ENCODE measurements at regions of chr14 and their contacts with region 1.

Region 1: DNA sequence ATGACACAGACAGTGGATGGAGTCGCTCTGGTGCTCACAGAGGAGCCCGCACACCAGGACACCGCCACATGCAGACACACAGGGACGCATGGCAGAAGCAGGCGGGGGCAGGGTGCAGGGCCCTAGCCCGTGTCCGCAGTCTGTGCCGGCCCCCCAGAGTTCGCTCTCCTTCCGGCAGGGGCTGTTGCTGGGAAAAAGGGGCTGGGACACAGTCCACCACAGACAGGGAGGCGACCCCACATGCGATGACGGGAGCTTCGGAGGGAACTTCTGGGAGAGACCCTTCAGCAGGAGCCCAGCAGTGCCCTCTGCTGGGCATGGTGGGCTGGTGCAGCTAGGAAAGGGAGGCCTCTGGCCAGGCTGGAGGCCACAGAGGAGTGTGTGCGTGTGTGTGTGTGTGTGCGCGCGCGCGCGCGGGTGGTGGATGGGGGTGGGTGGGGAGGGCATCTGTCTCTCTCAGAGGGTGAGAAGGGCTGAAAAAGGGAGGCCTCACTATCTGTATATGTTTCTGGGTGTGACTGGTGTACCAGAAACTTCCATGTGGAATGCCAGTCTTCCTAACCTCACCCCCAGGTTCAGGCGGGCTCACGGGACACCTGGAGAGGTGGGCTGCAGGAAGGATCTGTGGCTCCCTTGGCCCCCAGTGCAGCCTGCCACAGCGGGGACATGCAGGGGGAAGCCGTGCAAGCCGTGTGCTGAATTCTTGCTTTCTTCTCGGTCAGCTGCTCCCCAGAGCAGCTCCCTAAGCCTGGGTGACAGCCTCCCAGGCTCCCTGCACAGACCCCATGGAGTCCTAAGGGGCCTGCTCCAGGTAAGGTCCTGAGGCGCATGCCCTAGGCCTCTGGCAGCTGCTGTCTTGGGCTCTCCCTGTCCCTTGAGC is 60.7 kb downstream of the PLEKHG3 start:
- DNase-seq: peak; percentile 75
- H3K4me3 Mint-ChIP-seq: no peak overlapping the region
- H3K27ac Mint-ChIP-seq: no peak overlapping the region
- H3K4me1 Mint-ChIP-seq: peaks cover 50% of the 10 kb centered on the region
- H3K27me3 Mint-ChIP-seq: no peaks in the 10 kb centered on the region
- CTCF ChIP-seq: peak; percentile 92

Region 2: GRCh38 chr14:64503478-64504309 is 261.2 kb before region 1 on chr14 and contains the start of gene ZBTB25:
- CTCF ChIA-PET with region 1: no interaction called
- POLR2A ChIA-PET with region 1: interaction called, 12 read pairs
- intact Hi-C with region 1: loop called (anchors 5 kb)
- DNase-seq: peak; percentile 90
- H3K4me3 Mint-ChIP-seq: peak within 1 kb of the TSS; percentile 83
- H3K27ac Mint-ChIP-seq: peak within 1 kb of the TSS; percentile 98
- H3K4me1 Mint-ChIP-seq: peaks cover 51% of the 10 kb centered on the region
- H3K27me3 Mint-ChIP-seq: no peaks in the 10 kb centered on the region
- CTCF ChIP-seq: no peak
- total RNA-seq, gene ZBTB25: 11.7 and 15.3 TPM in 2 replicates

Region 3: DNA sequence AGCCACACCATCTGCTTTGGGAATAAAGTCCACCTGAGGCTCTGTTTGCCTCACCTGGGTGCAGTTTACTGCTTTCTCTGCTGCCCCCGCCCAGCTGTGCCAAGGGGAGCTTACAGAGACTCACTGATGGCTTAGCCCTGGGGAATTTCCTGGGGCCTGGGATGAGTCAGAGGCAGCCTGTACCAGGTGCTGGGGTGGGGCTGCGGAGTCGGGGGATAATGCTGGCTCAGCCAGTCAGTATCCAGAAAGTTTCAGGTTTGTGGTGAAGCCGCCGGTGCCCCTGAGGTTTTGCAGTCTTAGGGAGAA is 38.3 kb before region 1 on chr14:
- CTCF ChIA-PET with region 1: interaction called, 4 read pairs
- POLR2A ChIA-PET with region 1: interaction called, 12 read pairs
- intact Hi-C with region 1: no loop called
- DNase-seq: peak; percentile 87
- H3K4me3 Mint-ChIP-seq: peak overlapping the region; percentile 23
- H3K27ac Mint-ChIP-seq: peak overlapping the region; percentile 90
- H3K4me1 Mint-ChIP-seq: peaks cover 34% of the 10 kb centered on the region
- H3K27me3 Mint-ChIP-seq: no peaks in the 10 kb centered on the region
- CTCF ChIP-seq: no peak

Measured in MCF 10A (cell line).